A673 (cell line): ENCODE measurements at regions of chr12 and their contacts with region 1.

Region 1: GRCh38 chr12:47742253-47742825 is 16.3 kb downstream of the RAPGEF3 start:
- DNase-seq: no peak
- H3K4me3 ChIP-seq: no peak overlapping the region
- H3K27ac ChIP-seq: no peak overlapping the region
- H3K4me1 ChIP-seq: peaks cover 39% of the 10 kb centered on the region
- H3K27me3 ChIP-seq: no peaks in the 10 kb centered on the region
- CTCF ChIP-seq: peak; percentile 98

Region 2: GRCh38 chr12:47758834-47759690 is 16.7 kb after region 1 on chr12 and contains the start of gene RAPGEF3:
- CTCF ChIA-PET with region 1: interaction called, 18 read pairs
- POLR2A ChIA-PET with region 1: no interaction called
- intact Hi-C with region 1: no loop called
- DNase-seq: peak; percentile 87
- H3K4me3 ChIP-seq: peak within 1 kb of the TSS; percentile 66
- H3K27ac ChIP-seq: peak within 1 kb of the TSS; percentile 75
- H3K4me1 ChIP-seq: peaks cover 18% of the 10 kb centered on the region
- H3K27me3 ChIP-seq: no peaks in the 10 kb centered on the region
- CTCF ChIP-seq: peak; percentile 60
- total RNA-seq, gene RAPGEF3: 4.3 and 5.7 TPM in 2 replicates

Region 3: GRCh38 chr12:47882781-47883546 is 140.6 kb after region 1 on chr12:
- CTCF ChIA-PET with region 1: no interaction called
- POLR2A ChIA-PET with region 1: no interaction called
- intact Hi-C with region 1: no loop called
- DNase-seq: no peak
- H3K4me3 ChIP-seq: no peak overlapping the region
- H3K27ac ChIP-seq: no peak overlapping the region
- H3K4me1 ChIP-seq: no peaks in the 10 kb centered on the region
- H3K27me3 ChIP-seq: no peaks in the 10 kb centered on the region
- CTCF ChIP-seq: no peak